Posterior vena cava (tissue), 2 donors: ENCODE measurements at regions of chr16 and their contacts with region 1.

Region 1: DNA sequence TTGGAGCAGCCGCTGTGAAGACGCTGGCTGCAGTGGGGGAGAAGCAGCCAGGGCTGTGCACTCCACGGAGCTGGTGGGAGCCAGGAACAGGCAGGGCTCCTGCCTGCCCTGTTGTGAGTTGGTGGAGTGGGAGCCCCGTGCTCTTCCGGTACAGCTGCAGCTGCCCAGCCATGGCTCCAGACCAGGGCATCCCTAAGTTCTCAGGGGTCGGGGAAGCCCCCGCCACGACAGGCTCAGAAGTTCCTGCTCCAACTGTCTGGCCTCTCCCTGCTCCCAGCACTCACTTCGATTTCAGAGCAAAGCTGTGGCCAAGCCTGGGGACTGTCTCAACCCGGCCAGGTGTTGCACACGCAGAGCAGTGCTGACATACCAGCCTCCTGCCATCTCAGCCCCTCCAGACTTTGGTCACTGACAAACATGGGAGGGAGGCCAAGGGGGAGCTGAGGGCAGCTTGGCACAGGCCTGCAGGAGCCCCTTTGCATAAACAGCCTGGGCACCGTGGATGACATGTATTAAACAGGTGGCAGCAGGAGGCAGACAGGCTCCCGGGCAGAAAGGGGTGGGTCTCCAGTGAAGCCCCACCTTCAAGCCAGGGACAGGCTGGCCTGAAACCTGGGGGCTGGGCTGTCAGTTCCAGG is 13.9 kb upstream of the KDM8 start:
- DNase-seq: no peak

Region 2: GRCh38 chr16:25257504-25257955 is 1931.9 kb before region 1 on chr16 and contains the start of gene ZKSCAN2:
- intact Hi-C with region 1: loop called in 1 of 2 experiments (anchors 5 kb)
- DNase-seq: peak; percentile 97
- total RNA-seq, gene ZKSCAN2: 4.3 to 4.9 TPM

Region 3: GRCh38 chr16:27169511-27170071 is 19.9 kb before region 1 on chr16:
- intact Hi-C with region 1: no loop called
- DNase-seq: no peak

Region 4: GRCh38 chr16:27203429-27204231 is 14.2 kb after region 1 on chr16 and contains the start of gene KDM8:
- intact Hi-C with region 1: no loop called
- DNase-seq: peak; percentile 100
- total RNA-seq, gene KDM8: 4.4 to 4.6 TPM

Region 5: GRCh38 chr16:27232061-27232900 is 42.8 kb after region 1 on chr16:
- intact Hi-C with region 1: no loop called
- DNase-seq: peak; percentile 89